Lower leg skin (tissue), 4 donors: ENCODE measurements at regions of chr15 and their contacts with region 1.

Region 1: DNA sequence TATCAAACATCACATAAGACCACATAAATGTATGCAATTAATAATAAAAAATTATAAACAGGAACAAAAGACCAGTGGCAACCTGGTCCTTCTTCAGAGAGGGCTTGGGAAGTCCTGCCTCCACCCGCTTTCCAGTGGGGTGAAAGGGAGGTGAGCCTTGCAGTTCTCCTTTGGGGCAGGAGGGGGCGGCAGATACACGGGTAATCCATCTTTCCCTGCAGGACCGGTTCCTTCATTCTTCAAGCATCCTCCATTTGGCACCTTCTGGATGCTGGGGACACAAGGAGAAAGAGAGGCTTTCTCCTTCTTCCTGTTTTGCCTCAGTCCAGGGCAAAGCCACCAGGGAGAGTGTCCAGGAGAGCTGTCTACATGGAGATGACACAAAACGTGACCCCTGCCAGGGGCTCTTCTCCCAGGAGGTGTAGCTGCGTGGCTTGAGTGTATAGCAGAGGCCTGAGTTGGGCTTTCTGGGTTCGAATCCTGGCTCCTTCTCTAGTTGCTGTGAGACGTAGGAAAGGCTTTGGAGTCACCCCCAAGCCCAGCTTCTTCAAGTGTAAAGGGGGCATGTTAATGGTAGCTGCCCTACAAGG is 23.2 kb downstream of the RPLP1 start:
- DNase-seq: peak; percentile 77 to 97
- H3K4me3 ChIP-seq: no peak overlapping the region
- CTCF ChIP-seq: peak in 1 of 3 donors; percentile 85
- POLR2A ChIP-seq: no peak

Region 2: GRCh38 chr15:70488002-70488605 is 1012.2 kb after region 1 on chr15:
- intact Hi-C with region 1: loop called (anchors 5 kb)
- DNase-seq: peak; percentile 67 to 94
- H3K4me3 ChIP-seq: no peak overlapping the region
- CTCF ChIP-seq: peak in 1 of 3 donors; percentile 95
- POLR2A ChIP-seq: no peak